ENCODE measurements at regions of chr2 and their contacts with region 1.

Region 1: DNA sequence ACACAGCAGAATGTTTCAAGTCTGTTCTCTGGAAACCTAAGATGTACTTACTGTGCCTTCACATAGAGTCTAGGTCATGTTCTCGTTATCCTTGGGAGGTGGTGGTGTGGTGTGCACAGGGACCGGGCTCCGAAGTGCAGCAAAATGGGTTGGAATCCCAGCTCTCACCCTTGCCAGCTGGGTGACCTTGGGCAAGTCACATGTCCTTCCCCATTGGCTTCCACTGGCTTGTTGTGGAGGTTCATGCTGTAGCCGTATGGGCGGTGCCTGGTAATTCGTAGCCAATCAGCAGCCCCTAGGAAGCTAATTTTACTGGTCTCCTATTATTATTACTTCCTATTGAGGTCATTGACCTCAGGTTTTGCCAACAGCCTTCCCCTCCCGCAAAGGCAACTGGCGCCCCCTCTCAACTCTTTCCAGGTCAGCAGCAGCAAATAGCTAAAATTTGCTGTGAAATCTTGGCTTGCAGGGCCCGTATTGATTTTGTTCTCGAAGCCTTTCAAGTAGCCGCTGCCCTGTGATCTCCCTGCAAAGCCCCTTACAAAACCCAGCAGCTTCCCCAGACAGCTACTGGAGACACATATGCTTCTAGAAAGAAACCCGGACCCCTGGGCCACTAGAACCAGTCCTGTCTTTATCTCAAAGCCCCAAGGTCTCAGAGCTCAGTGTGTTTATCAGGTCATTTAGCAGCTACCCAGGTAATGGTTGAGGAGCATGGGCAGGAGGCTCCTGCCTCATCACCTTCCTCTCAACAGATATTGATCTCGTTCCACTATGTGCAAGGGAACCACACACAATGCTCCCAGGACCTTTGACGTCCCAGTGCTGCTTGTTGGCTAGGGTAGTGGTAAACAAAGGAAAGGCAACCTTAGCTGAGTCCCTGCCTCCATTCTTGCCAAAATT is 66.5 kb upstream of the SLC1A4 start:
- DNase-seq: no peak
- ATAC-seq: no peak
- H3K4me3 ChIP-seq: no peak overlapping the region
- H3K27ac ChIP-seq: no peak overlapping the region
- H3K4me1 ChIP-seq: peaks cover 0 to 11% (median 0%) of the 10 kb centered on the region in 9 donors
- H3K27me3 ChIP-seq: no peaks in the 10 kb centered on the region
- CTCF ChIP-seq: no peak

Region 2: GRCh38 chr2:64978514-64979268 is 56.0 kb after region 1 on chr2:
- intact Hi-C with region 1: no loop called
- DNase-seq: no peak
- ATAC-seq: peak in 2 of 8 donors; percentile 37 to 43
- H3K4me3 ChIP-seq: no peak overlapping the region
- H3K27ac ChIP-seq: no peak overlapping the region
- H3K4me1 ChIP-seq: peaks cover 0 to 43% (median 11%) of the 10 kb centered on the region in 9 donors
- H3K27me3 ChIP-seq: no peaks in the 10 kb centered on the region
- CTCF ChIP-seq: peak in 7 of 9 donors; percentile 12 to 51 (median 34)

Region 3: GRCh38 chr2:65177751-65178442 is 255.2 kb after region 1 on chr2:
- intact Hi-C with region 1: loop called in 5 of 10 experiments (anchors 5 to 10 kb)
- DNase-seq: no peak
- ATAC-seq: no peak
- H3K4me3 ChIP-seq: no peak overlapping the region
- H3K27ac ChIP-seq: no peak overlapping the region
- H3K4me1 ChIP-seq: no peaks in the 10 kb centered on the region
- H3K27me3 ChIP-seq: no peaks in the 10 kb centered on the region
- CTCF ChIP-seq: no peak

Region 4: GRCh38 chr2:65186872-65187851 is 264.4 kb after region 1 on chr2:
- intact Hi-C with region 1: loop called in 5 of 10 experiments (anchors 1 to 10 kb)
- DNase-seq: peak; percentile 55 to 77
- ATAC-seq: peak; percentile 68 to 96 (median 93)
- H3K4me3 ChIP-seq: no peak overlapping the region
- H3K27ac ChIP-seq: no peak overlapping the region
- H3K4me1 ChIP-seq: peaks cover 0 to 10% (median 0%) of the 10 kb centered on the region in 9 donors
- H3K27me3 ChIP-seq: no peaks in the 10 kb centered on the region
- CTCF ChIP-seq: peak; percentile 61 to 90 (median 80)

Region 5: GRCh38 chr2:65765376-65765775 is 842.6 kb after region 1 on chr2:
- intact Hi-C with region 1: no loop called
- DNase-seq: no peak
- ATAC-seq: no peak
- H3K4me3 ChIP-seq: no peak overlapping the region
- H3K27ac ChIP-seq: no peak overlapping the region
- H3K4me1 ChIP-seq: no peaks in the 10 kb centered on the region
- H3K27me3 ChIP-seq: no peaks in the 10 kb centered on the region
- CTCF ChIP-seq: no peak